ENCODE measurements at regions of chr3 and their contacts with region 1.

Region 1: DNA sequence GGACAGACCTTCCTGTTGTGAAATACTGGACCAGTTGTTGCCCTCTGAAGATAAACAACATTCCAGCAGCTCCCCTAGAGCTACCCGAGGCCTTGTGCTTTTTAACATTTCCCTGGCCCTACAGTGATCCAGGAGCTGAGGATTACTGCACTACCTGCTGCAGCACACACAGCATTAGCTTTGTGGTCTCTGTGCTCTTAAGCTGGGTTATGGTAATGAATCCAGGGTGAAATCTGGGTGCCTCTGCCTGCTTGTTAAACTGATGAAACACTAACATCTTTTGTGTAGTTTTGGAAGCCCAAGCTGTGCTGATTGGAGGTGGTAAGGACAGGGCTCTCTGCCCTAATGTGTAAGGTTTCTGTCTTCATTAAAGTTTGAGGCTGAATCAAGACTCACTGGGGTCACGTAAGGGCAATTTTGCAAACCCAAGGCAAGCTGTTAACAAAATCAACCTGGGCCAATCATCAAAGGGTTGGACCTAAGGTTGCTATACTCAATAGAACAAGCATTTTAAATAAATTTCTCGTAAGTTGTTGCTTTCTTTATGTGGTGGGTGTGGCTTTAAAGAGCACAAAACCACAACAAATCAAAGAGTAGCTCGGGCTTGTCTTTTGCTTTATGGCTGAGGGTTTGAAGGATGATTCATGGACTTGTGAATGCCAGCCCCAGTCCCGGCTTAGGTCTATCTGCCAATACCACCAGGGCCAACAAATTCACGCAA is 183.9 kb downstream of the TPRG1 start:
- DNase-seq: no peak
- CTCF ChIP-seq: no peak

Region 2: DNA sequence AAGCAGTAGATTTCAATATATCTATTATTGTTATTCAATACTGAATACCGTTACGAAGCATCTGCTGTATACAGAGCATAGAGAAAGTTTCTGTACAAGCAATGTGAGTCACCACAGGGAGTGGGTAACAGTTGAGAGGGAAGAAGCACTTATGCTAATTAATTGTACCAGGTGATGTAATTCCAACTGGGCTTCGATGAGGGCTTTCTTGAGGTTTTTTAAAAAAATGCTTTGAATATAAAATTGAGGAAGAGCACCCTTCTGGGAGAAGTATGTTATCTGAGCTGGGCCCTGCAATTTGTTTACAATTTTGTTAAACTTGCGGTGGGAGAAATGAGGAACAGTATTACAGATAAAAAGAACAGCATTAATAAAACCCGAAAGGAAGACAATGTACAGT is 14.0 kb after region 1 on chr3:
- CTCF ChIA-PET with region 1: interaction called, 11 read pairs
- POLR2A ChIA-PET with region 1: no interaction called
- DNase-seq: no peak
- CTCF ChIP-seq: no peak

Measured in GM10248 (cell line).